HEK293 (cell line): ENCODE measurements at regions of chr21 and their contacts with region 1.

Region 1: GRCh38 chr21:30257773-30258172 is 25.0 kb downstream of the KRTAP24-1 start:
- H3K4me3 ChIP-seq: no peak overlapping the region
- H3K27ac ChIP-seq: no peak overlapping the region
- H3K4me1 ChIP-seq: no peaks in the 10 kb centered on the region
- CTCF ChIP-seq: no peak

Region 2: DNA sequence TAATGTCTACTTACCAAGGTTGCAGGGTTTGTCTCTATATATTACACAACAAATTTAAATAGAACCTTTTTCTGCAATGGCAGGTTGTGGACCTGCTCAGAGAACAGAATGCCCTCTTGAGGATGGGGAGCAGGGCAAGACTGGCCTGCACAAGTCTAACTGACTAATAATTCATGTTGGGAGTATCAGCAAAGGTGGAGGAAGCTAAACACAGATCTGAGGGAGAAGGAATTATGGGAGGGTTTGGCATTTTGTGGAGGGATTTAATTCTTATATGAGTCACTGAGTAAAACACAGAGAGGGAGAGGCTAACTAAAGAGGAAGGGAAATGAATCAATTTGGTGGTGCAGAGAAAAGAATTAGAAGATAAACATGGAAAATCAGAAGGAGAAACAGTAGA is 131.2 kb before region 1 on chr21:
- CTCF ChIA-PET with region 1: no interaction called
- POLR2A ChIA-PET with region 1: no interaction called
- H3K4me3 ChIP-seq: no peak overlapping the region
- H3K27ac ChIP-seq: no peak overlapping the region
- H3K4me1 ChIP-seq: no peaks in the 10 kb centered on the region
- CTCF ChIP-seq: no peak

Region 3: GRCh38 chr21:30168086-30168485 is 89.7 kb before region 1 on chr21:
- CTCF ChIA-PET with region 1: no interaction called
- POLR2A ChIA-PET with region 1: no interaction called
- H3K4me3 ChIP-seq: no peak overlapping the region
- H3K27ac ChIP-seq: no peak overlapping the region
- H3K4me1 ChIP-seq: no peaks in the 10 kb centered on the region
- CTCF ChIP-seq: no peak

Region 4: DNA sequence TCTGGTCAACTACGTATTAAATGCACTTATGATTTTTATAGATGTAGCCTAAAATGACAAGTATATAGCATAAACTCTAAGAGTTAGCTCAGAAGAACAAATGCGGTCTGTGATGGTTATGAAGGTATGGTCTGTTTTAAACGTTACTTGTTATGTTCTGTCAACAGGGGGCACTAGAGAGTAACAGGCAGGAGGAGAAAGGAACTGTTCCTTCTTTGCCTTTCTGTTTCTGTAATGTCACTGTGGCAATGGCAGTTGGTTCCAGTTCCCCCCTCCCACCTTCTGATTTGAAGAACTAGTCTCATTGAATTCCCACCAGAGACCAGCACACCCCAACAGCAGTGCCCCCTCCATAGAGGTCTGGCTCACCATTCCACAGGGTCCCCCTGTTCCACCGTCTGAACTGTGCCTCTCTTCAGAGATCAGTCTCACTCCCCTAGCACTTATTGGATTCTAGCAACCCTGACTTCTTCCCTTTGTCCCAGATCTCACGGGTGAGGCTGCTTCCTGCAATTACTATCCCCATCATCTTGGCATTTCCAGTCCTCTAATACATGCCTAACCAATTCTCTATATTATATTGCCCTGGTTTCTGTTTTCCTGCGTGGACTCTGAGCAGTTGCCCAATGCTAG is 11.0 kb after region 1 on chr21:
- CTCF ChIA-PET with region 1: interaction called, 15 read pairs
- POLR2A ChIA-PET with region 1: no interaction called
- H3K4me3 ChIP-seq: no peak overlapping the region
- H3K27ac ChIP-seq: no peak overlapping the region
- H3K4me1 ChIP-seq: no peaks in the 10 kb centered on the region
- CTCF ChIP-seq: no peak

Region 5: GRCh38 chr21:30502041-30502440 is 244.3 kb after region 1 on chr21 and contains the start of gene KRTAP19-5:
- CTCF ChIA-PET with region 1: no interaction called
- POLR2A ChIA-PET with region 1: no interaction called
- H3K4me3 ChIP-seq: no peak within 1 kb of the TSS
- H3K27ac ChIP-seq: no peak within 1 kb of the TSS
- H3K4me1 ChIP-seq: no peaks in the 10 kb centered on the region
- CTCF ChIP-seq: no peak